ENCODE measurements at regions of chr19 and their contacts with region 1.

Region 1: GRCh38 chr19:53977429-53977990 is 13.9 kb upstream of the CACNG6 start:
- DNase-seq: peak; percentile 91
- ATAC-seq: peak; percentile 12
- H3K4me3 ChIP-seq: 0 out of 2 replicates have a peak overlapping the region, but pooled peaks have one; percentile 12
- H3K27ac ChIP-seq: no peak overlapping the region
- H3K4me1 ChIP-seq: peaks cover 24% of the 10 kb centered on the region
- H3K27me3 ChIP-seq: no peaks in the 10 kb centered on the region
- CTCF ChIP-seq: no peak

Region 2: GRCh38 chr19:53867225-53868090 is 110.1 kb before region 1 on chr19 and contains the start of gene MYADM:
- CTCF ChIA-PET with region 1: interaction called, 8 read pairs
- POLR2A ChIA-PET with region 1: interaction called, 10 read pairs
- intact Hi-C with region 1: loop called (anchors 1 kb)
- DNase-seq: peak; percentile 100
- ATAC-seq: peak; percentile 51
- H3K4me3 ChIP-seq: peak within 1 kb of the TSS; percentile 87
- H3K27ac ChIP-seq: peak within 1 kb of the TSS; percentile 88
- H3K4me1 ChIP-seq: peaks cover 35% of the 10 kb centered on the region
- H3K27me3 ChIP-seq: no peaks in the 10 kb centered on the region
- CTCF ChIP-seq: no peak
- total RNA-seq, gene MYADM: 58.9 and 63.5 TPM in 2 replicates

Region 3: GRCh38 chr19:53917356-53917755 is 60.2 kb before region 1 on chr19:
- CTCF ChIA-PET with region 1: no interaction called
- POLR2A ChIA-PET with region 1: no interaction called
- intact Hi-C with region 1: no loop called
- DNase-seq: no peak
- ATAC-seq: no peak
- H3K4me3 ChIP-seq: no peak overlapping the region
- H3K27ac ChIP-seq: no peak overlapping the region
- H3K4me1 ChIP-seq: no peaks in the 10 kb centered on the region
- H3K27me3 ChIP-seq: 0 out of 2 replicates have a peak, but pooled peaks cover 5% of the 10 kb centered on the region
- CTCF ChIP-seq: no peak

Region 4: DNA sequence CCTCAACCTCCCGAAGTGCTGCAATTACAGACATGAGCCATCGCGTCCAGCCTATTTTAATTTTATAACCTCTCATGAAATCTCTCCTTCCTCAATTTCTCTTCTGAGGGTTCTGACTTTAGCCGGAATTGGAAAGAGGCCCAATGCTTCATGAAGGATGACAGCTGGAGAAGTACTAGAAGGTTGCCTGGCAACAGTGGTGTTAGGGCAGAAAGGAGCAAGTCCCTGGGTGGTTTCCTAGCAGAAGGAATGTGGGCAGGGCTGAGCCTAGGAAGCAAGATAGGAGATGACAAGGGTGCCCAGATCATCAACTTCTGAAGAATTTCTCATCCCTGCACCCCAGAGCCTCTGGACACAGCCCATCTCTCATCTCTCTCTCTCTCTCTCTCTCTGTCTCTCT is 39.8 kb after region 1 on chr19:
- CTCF ChIA-PET with region 1: interaction called, 3 read pairs
- POLR2A ChIA-PET with region 1: interaction called, 3 read pairs
- intact Hi-C with region 1: loop called (anchors 1 kb)
- DNase-seq: peak; percentile 53
- ATAC-seq: no peak
- H3K4me3 ChIP-seq: no peak overlapping the region
- H3K27ac ChIP-seq: no peak overlapping the region
- H3K4me1 ChIP-seq: peaks cover 18% of the 10 kb centered on the region
- H3K27me3 ChIP-seq: no peaks in the 10 kb centered on the region
- CTCF ChIP-seq: no peak

Region 5: DNA sequence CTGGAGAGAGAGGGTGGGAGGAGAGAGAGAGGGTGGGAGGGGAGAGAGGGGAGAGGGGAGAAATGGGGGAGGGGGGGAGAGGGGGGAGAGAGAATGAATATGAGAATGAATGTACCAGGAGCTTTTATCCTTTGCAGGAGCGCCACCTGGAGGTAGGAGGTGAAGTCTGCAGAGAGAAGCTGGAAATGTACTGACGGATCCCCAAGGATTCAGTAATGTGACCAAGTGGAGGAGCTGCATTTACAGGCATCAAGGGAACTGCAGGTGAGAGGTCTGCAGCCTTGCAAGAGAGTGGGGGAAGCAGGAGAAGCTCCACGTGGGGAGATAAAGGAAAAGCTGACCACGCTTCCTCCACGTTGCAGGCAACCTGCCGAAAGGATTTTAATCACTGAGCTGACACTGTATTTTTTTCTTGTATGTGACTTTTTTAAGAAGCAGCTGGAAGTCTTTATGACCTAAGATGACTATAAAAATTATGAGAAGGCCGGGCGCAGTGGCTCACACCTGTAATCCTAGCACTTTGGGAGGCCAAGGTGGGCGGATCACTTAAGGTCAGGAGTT is 52.5 kb after region 1 on chr19:
- CTCF ChIA-PET with region 1: interaction called, 26 read pairs
- POLR2A ChIA-PET with region 1: interaction called, 8 read pairs
- intact Hi-C with region 1: loop called (anchors 2 kb)
- DNase-seq: peak; percentile 94
- ATAC-seq: peak; percentile 79
- H3K4me3 ChIP-seq: no peak overlapping the region
- H3K27ac ChIP-seq: no peak overlapping the region
- H3K4me1 ChIP-seq: peaks cover 21% of the 10 kb centered on the region
- H3K27me3 ChIP-seq: no peaks in the 10 kb centered on the region
- CTCF ChIP-seq: peak; percentile 80